ENCODE measurements at regions of chr3 and their contacts with region 1.

Region 1: DNA sequence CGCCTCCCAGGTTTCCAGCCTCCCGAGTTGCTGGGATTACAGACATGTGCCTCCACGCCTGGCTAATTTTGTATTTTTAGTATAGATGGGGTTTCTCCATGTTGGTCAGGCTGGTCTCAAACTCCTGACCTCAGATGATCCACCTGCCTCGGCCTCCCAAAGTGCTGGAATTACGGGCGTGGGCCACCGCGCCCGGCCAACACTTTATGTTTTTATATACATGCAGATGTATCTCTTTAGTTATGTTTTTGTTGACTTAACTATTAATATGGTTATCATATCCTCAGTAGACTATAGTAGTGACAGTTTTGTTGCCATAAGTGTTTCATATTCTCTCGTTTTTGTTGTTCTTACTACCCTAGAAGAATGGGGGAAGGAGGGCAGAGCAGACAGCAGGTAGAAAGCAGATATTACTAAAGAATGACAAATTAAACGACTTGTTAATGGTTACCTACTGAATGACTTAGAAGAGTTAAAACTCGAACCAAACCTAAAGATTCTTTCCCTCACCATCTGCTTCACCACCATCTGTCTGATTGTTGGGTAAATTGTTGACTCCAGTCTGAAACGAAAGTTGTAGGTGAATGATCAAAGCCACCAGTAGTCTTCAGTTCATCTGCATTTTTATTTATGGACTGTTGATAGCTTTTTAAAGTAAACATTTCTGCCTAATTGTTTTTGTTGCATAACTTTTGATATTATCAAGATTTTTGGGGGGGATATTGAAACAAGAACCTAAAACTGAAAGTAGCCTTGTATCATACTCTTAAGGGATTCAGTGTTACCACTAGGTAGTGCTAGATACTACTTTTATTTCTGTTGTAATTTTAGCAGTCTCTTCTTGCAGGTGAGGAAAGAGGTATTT is 89.3 kb downstream of the RASA2 start:
- DNase-seq: no peak
- ATAC-seq: no peak
- H3K4me3 ChIP-seq: peak overlapping the region in 1 of 2 donors; percentile 34
- H3K27ac ChIP-seq: no peak overlapping the region
- H3K4me1 ChIP-seq: no peaks in the 10 kb centered on the region
- H3K27me3 ChIP-seq: no peaks in the 10 kb centered on the region

Region 2: GRCh38 chr3:141071681-141072260 is 504.3 kb before region 1 on chr3:
- intact Hi-C with region 1: no loop called
- DNase-seq: peak in 1 of 2 donors; percentile 50
- ATAC-seq: no peak
- H3K4me3 ChIP-seq: no peak overlapping the region
- H3K27ac ChIP-seq: no peak overlapping the region
- H3K4me1 ChIP-seq: no peaks in the 10 kb centered on the region
- H3K27me3 ChIP-seq: no peaks in the 10 kb centered on the region

Region 3: DNA sequence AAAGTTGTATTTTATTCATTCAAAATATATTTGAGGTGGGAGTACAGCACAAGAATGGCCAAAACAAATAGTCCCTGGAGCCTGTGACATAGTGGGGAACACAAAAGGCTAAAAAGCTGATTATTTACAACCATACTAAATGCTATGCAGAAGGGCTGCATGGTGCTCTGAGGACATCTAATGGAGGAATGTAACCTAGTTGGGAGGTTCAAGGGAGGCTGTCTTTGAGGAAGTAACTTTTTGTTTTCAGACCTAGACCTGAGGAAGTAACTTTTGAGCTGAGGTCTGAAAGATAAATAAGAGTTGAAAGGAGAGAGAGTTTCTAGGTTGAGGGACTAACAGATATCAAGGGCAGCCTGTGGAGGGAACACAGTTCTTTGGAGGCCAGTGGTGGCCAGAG is 124.1 kb before region 1 on chr3:
- intact Hi-C with region 1: no loop called
- DNase-seq: no peak
- ATAC-seq: peak; percentile 81
- H3K4me3 ChIP-seq: no peak overlapping the region
- H3K27ac ChIP-seq: peak overlapping the region in 1 of 2 donors; percentile 37
- H3K4me1 ChIP-seq: peaks cover 0 to 3% of the 10 kb centered on the region in 2 donors
- H3K27me3 ChIP-seq: no peaks in the 10 kb centered on the region

Region 4: GRCh38 chr3:141644931-141645330 is 68.8 kb after region 1 on chr3:
- intact Hi-C with region 1: loop called in 1 of 2 experiments (anchors 1 kb)
- DNase-seq: peak; percentile 87 to 92
- ATAC-seq: peak; percentile 82
- H3K4me3 ChIP-seq: no peak overlapping the region
- H3K27ac ChIP-seq: no peak overlapping the region
- H3K4me1 ChIP-seq: no peaks in the 10 kb centered on the region
- H3K27me3 ChIP-seq: no peaks in the 10 kb centered on the region

Region 5: GRCh38 chr3:141840737-141841544 is 264.8 kb after region 1 on chr3:
- intact Hi-C with region 1: no loop called
- DNase-seq: no peak
- ATAC-seq: no peak
- H3K4me3 ChIP-seq: no peak overlapping the region
- H3K27ac ChIP-seq: no peak overlapping the region
- H3K4me1 ChIP-seq: no peaks in the 10 kb centered on the region
- H3K27me3 ChIP-seq: no peaks in the 10 kb centered on the region

Region 6: GRCh38 chr3:141913150-141913811 is 337.2 kb after region 1 on chr3:
- intact Hi-C with region 1: loop called (anchors 5 kb)
- DNase-seq: no peak
- ATAC-seq: peak; percentile 60
- H3K4me3 ChIP-seq: no peak overlapping the region
- H3K27ac ChIP-seq: no peak overlapping the region
- H3K4me1 ChIP-seq: no peaks in the 10 kb centered on the region
- H3K27me3 ChIP-seq: no peaks in the 10 kb centered on the region